CD4-positive, alpha-beta memory T cell (primary cell): ENCODE measurements at regions of chr19 and their contacts with region 1.

Region 1: DNA sequence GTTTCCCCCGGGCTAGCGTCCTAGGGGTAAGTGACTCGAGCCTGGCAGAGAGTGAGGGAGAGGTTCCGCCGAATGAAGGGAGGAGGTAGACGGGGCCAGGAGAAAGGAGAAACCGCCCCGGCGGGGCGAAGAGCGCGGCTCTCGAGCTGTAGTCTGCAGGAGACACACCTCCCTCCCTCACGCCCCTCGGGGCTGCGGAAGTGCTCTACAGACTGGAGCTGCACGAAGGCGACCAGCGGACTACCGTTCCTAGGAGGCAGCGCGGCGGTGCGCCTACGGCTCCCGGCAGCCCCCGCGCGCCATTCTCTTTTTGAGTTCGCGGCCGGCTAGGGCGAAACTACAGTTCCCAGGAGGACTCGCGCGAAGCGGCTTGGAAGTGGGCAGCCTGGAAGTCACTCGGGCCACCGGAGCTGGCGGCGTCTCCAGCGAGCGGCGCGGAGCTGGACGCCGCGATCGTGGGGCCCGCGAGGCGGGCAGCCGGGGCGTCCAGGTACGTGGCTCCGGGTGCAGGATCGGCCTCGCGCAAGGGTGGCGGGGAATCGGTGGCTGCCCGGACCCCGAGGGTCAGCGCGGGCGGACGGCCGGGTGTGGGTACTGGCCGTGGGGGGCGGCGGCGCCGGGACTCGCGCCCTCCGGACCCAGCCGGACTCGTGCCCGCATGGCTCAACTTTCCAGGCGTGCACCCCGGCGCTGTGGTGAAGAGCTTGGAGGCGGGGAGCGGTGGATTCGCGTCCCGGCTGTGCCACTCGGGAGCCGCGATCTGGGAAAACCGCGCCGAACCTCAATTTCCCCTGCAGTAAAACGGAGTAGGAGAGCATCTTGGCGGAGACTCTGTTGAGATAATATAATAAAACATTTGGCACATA is at the start of gene SIPA1L3:
- DNase-seq: peak; percentile 89 to 92 (median 90)
- H3K4me3 ChIP-seq: peak within 1 kb of the TSS; percentile 63 to 96
- H3K4me3 Mint-ChIP-seq: peak within 1 kb of the TSS; percentile 92 to 96 (median 93)
- H3K27ac ChIP-seq: peak within 1 kb of the TSS; percentile 71
- H3K27ac Mint-ChIP-seq: peak within 1 kb of the TSS; percentile 86 to 95 (median 91)
- H3K4me1 ChIP-seq: peaks cover 22% of the 10 kb centered on the region
- H3K4me1 Mint-ChIP-seq: peaks cover 16 to 36% (median 25%) of the 10 kb centered on the region in 4 donors
- H3K27me3 ChIP-seq: no peaks in the 10 kb centered on the region
- H3K27me3 Mint-ChIP-seq: no peaks in the 10 kb centered on the region
- total RNA-seq, gene SIPA1L3: 31.8 to 35.0 TPM

Region 2: GRCh38 chr19:36973021-36973843 is 933.9 kb before region 1 on chr19:
- CTCF ChIA-PET with region 1: no interaction called
- POLR2A ChIA-PET with region 1: no interaction called
- intact Hi-C with region 1: loop called (anchors 2 kb)
- DNase-seq: peak; percentile 76 to 85 (median 77)
- H3K4me3 ChIP-seq: peak overlapping the region; percentile 80 to 86
- H3K4me3 Mint-ChIP-seq: peak overlapping the region; percentile 91 to 98 (median 96)
- H3K27ac ChIP-seq: peak overlapping the region; percentile 68
- H3K27ac Mint-ChIP-seq: peak overlapping the region; percentile 82 to 97 (median 94)
- H3K4me1 ChIP-seq: peaks cover 16% of the 10 kb centered on the region
- H3K4me1 Mint-ChIP-seq: peaks cover 8 to 22% (median 12%) of the 10 kb centered on the region in 4 donors
- H3K27me3 ChIP-seq: no peaks in the 10 kb centered on the region
- H3K27me3 Mint-ChIP-seq: no peaks in the 10 kb centered on the region

Region 3: DNA sequence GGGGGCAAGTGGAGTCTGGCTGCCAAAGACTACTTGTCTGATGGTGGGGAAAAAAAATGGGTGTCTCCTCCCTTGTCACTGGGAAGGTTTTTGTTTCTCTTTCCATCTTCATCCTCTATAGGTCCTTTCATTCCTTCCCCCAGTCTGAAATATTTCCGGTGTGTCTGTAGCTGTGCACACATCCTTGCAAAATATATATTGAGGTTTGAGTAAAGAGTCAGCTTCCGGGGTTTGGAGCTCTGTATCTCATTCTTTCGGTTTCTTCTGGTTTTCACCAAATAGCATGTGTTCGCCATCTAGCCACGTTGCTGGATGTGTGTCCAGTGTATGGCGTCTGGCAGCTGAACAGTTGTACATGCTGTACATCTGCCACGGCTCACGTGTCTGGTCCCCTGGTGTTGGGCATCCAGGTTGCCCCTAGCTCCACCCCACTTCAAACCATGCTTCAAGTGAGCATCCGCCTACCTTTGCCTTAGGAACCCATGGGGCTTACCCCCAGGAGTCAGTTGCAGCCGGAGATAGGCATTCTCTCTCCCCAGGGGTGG is 142.1 kb after region 1 on chr19:
- CTCF ChIA-PET with region 1: interaction called, 12 read pairs
- POLR2A ChIA-PET with region 1: interaction called, 28 read pairs
- intact Hi-C with region 1: loop called (anchors 1 kb)
- DNase-seq: peak; percentile 72 to 85 (median 81)
- H3K4me3 ChIP-seq: peak overlapping the region; percentile 2 to 46
- H3K4me3 Mint-ChIP-seq: peak overlapping the region; percentile 76 to 88 (median 82)
- H3K27ac ChIP-seq: peak overlapping the region; percentile 57
- H3K27ac Mint-ChIP-seq: peak overlapping the region; percentile 88 to 99 (median 97)
- H3K4me1 ChIP-seq: peaks cover 35% of the 10 kb centered on the region
- H3K4me1 Mint-ChIP-seq: peaks cover 25 to 45% (median 32%) of the 10 kb centered on the region in 4 donors
- H3K27me3 ChIP-seq: no peaks in the 10 kb centered on the region
- H3K27me3 Mint-ChIP-seq: no peaks in the 10 kb centered on the region

Region 4: DNA sequence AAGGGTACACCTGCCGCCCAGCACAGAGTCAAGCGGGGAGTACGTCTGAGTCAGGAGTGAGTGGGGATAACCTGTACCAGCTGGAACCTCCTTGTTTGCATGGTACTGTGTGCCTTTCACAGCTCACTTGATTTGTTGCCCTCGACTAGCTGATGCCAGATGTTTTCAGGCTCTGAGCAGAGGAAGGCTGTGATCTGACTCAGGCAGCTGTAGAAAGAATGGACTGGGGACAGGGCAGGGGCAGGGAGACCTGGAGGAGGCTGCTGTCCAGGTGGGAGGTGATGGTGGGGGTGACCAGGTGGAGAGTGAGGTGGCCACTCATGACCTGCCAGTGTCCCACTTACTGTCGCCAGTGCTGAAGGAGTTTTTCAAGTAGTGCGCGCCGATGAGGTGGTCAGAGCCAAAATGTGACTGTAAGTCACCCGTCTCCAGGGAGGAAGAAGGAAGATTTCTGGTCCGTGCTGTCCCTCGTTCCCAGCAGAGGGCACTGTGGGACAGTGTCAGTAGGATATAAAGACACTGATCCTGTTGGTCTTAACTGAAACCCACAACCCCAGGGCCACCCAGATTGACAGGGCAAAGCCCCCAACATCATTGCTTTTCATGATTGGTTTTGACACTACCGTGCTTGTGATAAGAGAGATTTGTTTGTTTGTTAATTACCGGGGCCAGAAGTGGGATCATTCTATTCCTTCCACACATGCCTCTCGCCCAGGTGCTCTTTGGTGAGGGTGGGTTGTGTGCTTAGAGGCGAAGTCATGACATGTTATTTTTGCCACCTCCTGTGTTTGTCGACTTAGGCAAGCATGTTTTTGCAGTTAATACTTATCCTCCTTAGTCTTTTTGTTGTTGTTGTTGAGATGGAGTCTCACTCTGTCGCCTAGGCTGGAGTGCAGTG is 188.6 kb after region 1 on chr19:
- CTCF ChIA-PET with region 1: interaction called, 11 read pairs
- POLR2A ChIA-PET with region 1: no interaction called
- intact Hi-C with region 1: loop called (anchors 1 kb)
- DNase-seq: peak in 4 of 5 donors; percentile 22 to 41 (median 26)
- H3K4me3 ChIP-seq: no peak overlapping the region
- H3K4me3 Mint-ChIP-seq: no peak overlapping the region
- H3K27ac ChIP-seq: no peak overlapping the region
- H3K27ac Mint-ChIP-seq: peak overlapping the region in 3 of 7 donors; percentile 11 to 61 (median 59)
- H3K4me1 ChIP-seq: no peaks in the 10 kb centered on the region
- H3K4me1 Mint-ChIP-seq: peaks cover 0 to 6% (median 1%) of the 10 kb centered on the region in 4 donors
- H3K27me3 ChIP-seq: no peaks in the 10 kb centered on the region
- H3K27me3 Mint-ChIP-seq: no peaks in the 10 kb centered on the region

Region 5: GRCh38 chr19:38245826-38246498 is 338.9 kb after region 1 on chr19:
- CTCF ChIA-PET with region 1: interaction called, 18 read pairs
- POLR2A ChIA-PET with region 1: no interaction called
- intact Hi-C with region 1: loop called (anchors 5 kb)
- DNase-seq: no peak
- H3K4me3 ChIP-seq: no peak overlapping the region
- H3K4me3 Mint-ChIP-seq: no peak overlapping the region
- H3K27ac ChIP-seq: no peak overlapping the region
- H3K27ac Mint-ChIP-seq: no peak overlapping the region
- H3K4me1 ChIP-seq: no peaks in the 10 kb centered on the region
- H3K4me1 Mint-ChIP-seq: peaks cover 2 to 5% (median 3%) of the 10 kb centered on the region in 4 donors
- H3K27me3 ChIP-seq: no peaks in the 10 kb centered on the region
- H3K27me3 Mint-ChIP-seq: peaks cover 0 to 4% of the 10 kb centered on the region in 2 donors

Region 6: GRCh38 chr19:38374429-38375176 is 467.5 kb after region 1 on chr19 and contains the start of gene PSMD8:
- CTCF ChIA-PET with region 1: interaction called, 10 read pairs
- POLR2A ChIA-PET with region 1: interaction called, 12 read pairs
- intact Hi-C with region 1: loop called (anchors 10 kb)
- DNase-seq: peak; percentile 98 to 99 (median 99)
- H3K4me3 ChIP-seq: peak within 1 kb of the TSS; percentile 71 to 97
- H3K4me3 Mint-ChIP-seq: peak within 1 kb of the TSS; percentile 96 to 99 (median 98)
- H3K27ac ChIP-seq: peak within 1 kb of the TSS; percentile 94
- H3K27ac Mint-ChIP-seq: peak within 1 kb of the TSS; percentile 90 to 99 (median 98)
- H3K4me1 ChIP-seq: peaks cover 30% of the 10 kb centered on the region
- H3K4me1 Mint-ChIP-seq: peaks cover 19 to 34% (median 24%) of the 10 kb centered on the region in 4 donors
- H3K27me3 ChIP-seq: no peaks in the 10 kb centered on the region
- H3K27me3 Mint-ChIP-seq: peaks cover 2% of the 10 kb centered on the region in 2 donors
- total RNA-seq, gene PSMD8: 89.6 to 90.6 TPM